Activated CD8-positive, alpha-beta T cell treated with anti-CD3 and anti-CD28 coated beads for 36 hours (primary cell): ENCODE measurements at regions of chr4 and their contacts with region 1.

Region 1: GRCh38 chr4:41882625-41883347 is 52.4 kb upstream of the TMEM33 start:
- DNase-seq: peak; percentile 64
- ATAC-seq: peak; percentile 91
- H3K4me3 Mint-ChIP-seq: peak overlapping the region; percentile 56
- H3K27ac Mint-ChIP-seq: no peak overlapping the region
- H3K4me1 Mint-ChIP-seq: peaks cover 12% of the 10 kb centered on the region
- H3K27me3 Mint-ChIP-seq: peaks cover 41% of the 10 kb centered on the region
- CTCF ChIP-seq: peak; percentile 99

Region 2: GRCh38 chr4:41281038-41281634 is 601.6 kb before region 1 on chr4:
- CTCF ChIA-PET with region 1: interaction called, 8 read pairs
- POLR2A ChIA-PET with region 1: no interaction called
- intact Hi-C with region 1: loop called (anchors 2 kb)
- DNase-seq: peak; percentile 33
- ATAC-seq: peak; percentile 83
- H3K4me3 Mint-ChIP-seq: no peak overlapping the region
- H3K27ac Mint-ChIP-seq: no peak overlapping the region
- H3K4me1 Mint-ChIP-seq: no peaks in the 10 kb centered on the region
- H3K27me3 Mint-ChIP-seq: peaks cover 7% of the 10 kb centered on the region
- CTCF ChIP-seq: peak; percentile 85

Region 3: GRCh38 chr4:41692717-41693345 is 190.0 kb before region 1 on chr4:
- CTCF ChIA-PET with region 1: interaction called, 29 read pairs
- POLR2A ChIA-PET with region 1: no interaction called
- intact Hi-C with region 1: loop called (anchors 2 kb)
- DNase-seq: peak; percentile 46
- ATAC-seq: no peak
- H3K4me3 Mint-ChIP-seq: no peak overlapping the region
- H3K27ac Mint-ChIP-seq: no peak overlapping the region
- H3K4me1 Mint-ChIP-seq: no peaks in the 10 kb centered on the region
- H3K27me3 Mint-ChIP-seq: peaks cover 4% of the 10 kb centered on the region
- CTCF ChIP-seq: peak; percentile 82

Region 4: DNA sequence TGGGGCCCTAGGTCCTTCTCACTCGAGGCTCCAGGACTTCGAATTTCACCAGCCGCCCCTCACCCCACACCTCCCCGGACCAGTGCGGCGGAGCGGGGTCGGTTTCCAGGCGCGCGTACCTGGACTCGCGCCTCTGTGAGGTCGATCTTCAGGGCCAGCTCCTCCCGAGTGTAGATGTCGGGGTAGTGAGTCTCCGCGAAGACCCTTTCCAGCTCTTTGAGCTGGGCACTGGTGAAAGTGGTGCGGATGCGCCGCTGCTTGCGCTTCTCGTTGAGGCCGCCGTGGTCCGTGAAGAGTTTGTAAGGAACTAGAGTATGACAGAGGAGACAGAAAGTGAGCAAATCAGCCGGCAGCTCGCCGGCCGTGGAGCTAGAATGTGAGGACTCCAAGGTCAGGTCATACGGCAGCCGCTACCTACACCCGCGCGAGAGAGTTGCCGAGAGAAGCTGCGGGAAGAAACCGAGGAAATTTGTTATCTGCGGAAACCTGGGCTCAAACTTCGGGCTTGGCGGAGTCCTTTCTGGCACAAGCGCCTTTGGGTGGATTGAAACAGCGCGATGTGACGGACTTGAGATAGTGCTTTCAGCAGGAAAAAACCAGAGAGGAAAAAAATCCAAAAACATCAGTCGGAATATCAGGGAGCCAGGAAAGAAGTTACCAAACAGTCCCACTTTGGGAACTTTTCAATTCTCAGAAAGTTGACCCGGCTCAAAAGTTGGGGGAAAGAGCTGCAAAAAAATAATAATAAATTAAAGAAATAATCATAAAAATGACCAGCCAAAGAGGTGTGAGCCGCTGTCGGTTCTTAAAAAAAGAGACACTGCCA is 135.3 kb before region 1 on chr4:
- CTCF ChIA-PET with region 1: interaction called, 4 read pairs
- POLR2A ChIA-PET with region 1: no interaction called
- intact Hi-C with region 1: loop called (anchors 5 kb)
- DNase-seq: no peak
- ATAC-seq: no peak
- H3K4me3 Mint-ChIP-seq: no peak overlapping the region
- H3K27ac Mint-ChIP-seq: no peak overlapping the region
- H3K4me1 Mint-ChIP-seq: no peaks in the 10 kb centered on the region
- H3K27me3 Mint-ChIP-seq: peaks cover 76% of the 10 kb centered on the region
- CTCF ChIP-seq: no peak